GM12878 (cell line): ENCODE measurements at regions of chr20 and their contacts with region 1.

Region 1: DNA sequence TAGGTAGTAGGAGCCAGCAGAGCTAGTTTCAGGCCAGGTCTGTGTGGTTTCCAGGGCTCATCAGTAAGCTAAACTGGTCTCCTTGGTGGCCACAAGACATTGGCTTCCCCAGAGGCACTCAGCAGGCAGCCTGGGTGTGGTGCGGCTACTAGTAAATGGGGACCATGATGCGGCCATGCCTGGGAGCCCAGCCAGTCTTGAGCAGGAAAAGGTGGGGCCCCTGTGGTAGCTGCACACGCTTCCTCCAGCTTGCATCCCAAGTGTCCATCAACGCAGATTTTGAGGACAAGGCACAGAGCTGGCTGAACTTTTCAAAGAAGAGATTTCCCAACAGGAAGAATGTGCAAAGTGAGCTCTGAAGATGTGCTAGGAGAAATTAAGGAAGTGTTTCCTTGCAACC is 107.4 kb upstream of the NAA20 start:
- DNase-seq: no peak
- ATAC-seq: no peak
- H3K4me3 ChIP-seq: no peak overlapping the region
- H3K27ac ChIP-seq: no peak overlapping the region
- H3K4me1 ChIP-seq: peaks cover 37% of the 10 kb centered on the region
- H3K27me3 ChIP-seq: no peaks in the 10 kb centered on the region
- CTCF ChIP-seq: no peak
- EP300 ChIP-seq: no peak
- POLR2A ChIP-seq: no peak
- RAD21 ChIP-seq: no peak

Region 2: GRCh38 chr20:19820555-19821211 is 89.0 kb before region 1 on chr20:
- CTCF ChIA-PET with region 1: interaction called, 4 read pairs
- POLR2A ChIA-PET with region 1: interaction called, 3 read pairs
- RAD21 ChIA-PET with region 1: interaction called, 6 read pairs
- SMC1A ChIA-PET with region 1: interaction called, 8 read pairs
- in situ Hi-C with region 1: no loop called
- intact Hi-C with region 1: loop called (anchors 2 kb)
- DNase-seq: no peak
- ATAC-seq: peak; percentile 76
- H3K4me3 ChIP-seq: no peak overlapping the region
- H3K27ac ChIP-seq: no peak overlapping the region
- H3K4me1 ChIP-seq: peaks cover 7% of the 10 kb centered on the region; the same call in 1 of the 2 replicates
- H3K27me3 ChIP-seq: peaks cover 0 to 2% of the 10 kb centered on the region in 2 experiments; a peak in 1 of 4 replicates
- CTCF ChIP-seq: no peak
- EP300 ChIP-seq: no peak
- POLR2A ChIP-seq: no peak
- RAD21 ChIP-seq: no peak

Region 3: DNA sequence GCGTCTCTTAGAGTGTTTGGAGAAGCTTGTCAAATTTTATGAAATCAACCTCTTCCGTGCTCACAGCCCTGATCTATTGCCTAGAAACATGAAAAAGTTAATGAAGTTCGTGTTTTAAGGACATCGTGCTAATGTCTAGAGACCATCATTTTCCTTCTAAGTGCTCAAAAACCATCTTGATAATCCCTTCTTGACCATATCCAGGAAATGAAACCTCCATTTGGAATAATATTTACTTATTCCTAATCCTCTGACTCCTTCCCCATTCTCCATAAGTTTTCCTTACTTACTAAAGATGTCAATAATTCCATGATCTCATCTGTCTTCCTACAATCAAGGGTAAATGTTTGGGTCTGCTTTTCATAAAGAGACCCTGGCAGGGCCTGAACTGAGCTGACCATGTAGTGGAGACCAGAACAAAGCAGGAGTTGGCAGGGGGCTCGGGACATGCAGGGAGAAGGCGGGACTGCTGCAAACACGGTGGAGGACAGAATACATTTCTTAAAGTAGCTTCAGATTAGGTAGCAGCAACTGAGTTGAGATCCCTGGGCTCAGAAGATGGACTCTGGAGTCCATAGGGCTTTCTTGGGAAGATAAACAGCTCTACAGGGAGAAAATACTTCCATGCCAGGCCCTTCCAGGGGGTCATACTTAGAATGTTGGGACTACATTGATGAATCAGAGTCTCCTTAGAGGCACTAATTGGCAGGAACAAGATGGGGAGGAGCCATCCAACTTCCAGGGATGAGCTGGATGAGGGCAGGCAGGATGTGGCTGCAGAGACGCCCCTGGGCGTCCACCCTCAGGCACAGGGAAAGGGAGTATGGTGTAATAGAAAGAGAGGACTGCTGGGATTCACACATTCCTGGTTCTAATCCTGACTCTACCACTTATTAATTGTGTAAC is 51.0 kb before region 1 on chr20:
- CTCF ChIA-PET with region 1: no interaction called
- POLR2A ChIA-PET with region 1: no interaction called
- RAD21 ChIA-PET with region 1: no interaction called
- SMC1A ChIA-PET with region 1: no interaction called
- in situ Hi-C with region 1: no loop called
- intact Hi-C with region 1: loop called (anchors 1 kb)
- DNase-seq: no peak
- ATAC-seq: no peak
- H3K4me3 ChIP-seq: no peak overlapping the region
- H3K27ac ChIP-seq: no peak overlapping the region
- H3K4me1 ChIP-seq: no peaks in the 10 kb centered on the region
- H3K27me3 ChIP-seq: no peaks in the 10 kb centered on the region
- CTCF ChIP-seq: no peak
- EP300 ChIP-seq: no peak
- POLR2A ChIP-seq: no peak
- RAD21 ChIP-seq: no peak

Region 4: GRCh38 chr20:19947611-19948264 is 38.0 kb after region 1 on chr20:
- CTCF ChIA-PET with region 1: interaction called, 4 read pairs
- POLR2A ChIA-PET with region 1: interaction called, 3 read pairs
- RAD21 ChIA-PET with region 1: interaction called, 14 read pairs
- SMC1A ChIA-PET with region 1: interaction called, 13 read pairs
- in situ Hi-C with region 1: no loop called
- intact Hi-C with region 1: no loop called
- DNase-seq: peak; percentile 40
- ATAC-seq: peak; percentile 81
- H3K4me3 ChIP-seq: no peak overlapping the region
- H3K27ac ChIP-seq: no peak overlapping the region
- H3K4me1 ChIP-seq: peaks cover 28% of the 10 kb centered on the region
- H3K27me3 ChIP-seq: 0 out of 4 replicates have a peak, but pooled peaks cover 0 to 2% of the 10 kb centered on the region in 2 experiments
- CTCF ChIP-seq: no peak
- EP300 ChIP-seq: peak; percentile 66 to 86; a peak in 3 of 4 replicates
- POLR2A ChIP-seq: no peak
- RAD21 ChIP-seq: 0 out of 2 replicates have a peak, but pooled peaks have one; percentile 14